ENCODE measurements at regions of chr1 and their contacts with region 1.

Region 1: GRCh38 chr1:109984456-109985275 is at the start of gene AHCYL1:
- DNase-seq: peak; percentile 100
- H3K4me3 ChIP-seq: peak within 1 kb of the TSS; percentile 79
- CTCF ChIP-seq: peak in 1 of 3 donors; percentile 99
- POLR2A ChIP-seq: peak in 1 of 2 donors; percentile 91
- total RNA-seq, gene AHCYL1: 42.3 to 54.4 (median 47.8) TPM

Region 2: DNA sequence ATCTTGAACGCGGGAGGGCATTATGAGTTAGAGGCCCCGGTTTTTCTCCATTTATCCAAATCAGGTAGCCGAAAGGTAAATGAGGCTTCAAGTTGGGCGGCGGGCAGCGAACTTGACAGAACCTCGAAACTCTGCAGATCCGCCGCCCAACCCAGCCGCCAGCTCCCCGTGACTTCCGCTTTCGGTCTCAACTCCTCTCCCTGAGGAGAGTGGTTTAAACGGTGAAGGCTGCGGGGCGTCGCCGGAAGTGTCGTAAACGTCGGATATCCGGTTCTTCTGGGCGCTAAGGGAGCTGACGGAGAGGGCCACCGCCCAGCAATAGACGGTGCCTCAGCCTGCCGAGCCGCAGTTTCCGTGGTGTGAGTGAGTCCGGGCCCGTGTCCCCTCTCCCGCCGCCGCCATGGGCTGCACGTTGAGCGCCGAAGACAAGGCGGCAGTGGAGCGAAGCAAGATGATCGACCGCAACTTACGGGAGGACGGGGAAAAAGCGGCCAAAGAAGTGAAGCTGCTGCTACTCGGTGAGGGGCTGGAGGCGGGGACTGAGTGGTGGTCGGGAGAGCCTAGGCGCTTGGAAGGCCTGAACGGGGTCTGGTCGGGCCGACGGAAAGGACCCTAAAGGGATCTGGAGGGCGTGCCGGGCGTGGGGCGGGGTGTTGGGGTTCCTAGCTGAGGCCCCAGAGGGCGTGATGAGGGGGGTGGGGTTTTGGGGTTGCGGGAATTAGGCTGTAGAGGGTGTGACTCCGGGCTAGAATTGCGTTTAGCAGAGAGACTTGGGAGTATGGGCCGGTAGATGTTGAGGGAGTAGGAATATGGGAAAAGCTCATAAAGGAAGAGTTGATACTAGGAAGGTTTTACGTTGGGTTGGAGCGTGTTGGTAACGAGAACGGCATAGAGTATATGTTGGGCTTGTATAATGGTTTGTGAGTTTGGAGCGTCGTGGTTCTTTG is 436.1 kb before region 1 on chr1 and contains the start of gene GNAI3:
- intact Hi-C with region 1: loop called (anchors 10 kb)
- DNase-seq: peak; percentile 98 to 100
- H3K4me3 ChIP-seq: peak within 1 kb of the TSS; percentile 83
- CTCF ChIP-seq: no peak
- POLR2A ChIP-seq: peak in 1 of 2 donors; percentile 80
- total RNA-seq, gene GNAI3: 8.5 to 13.2 (median 10.7) TPM

Region 3: GRCh38 chr1:109630081-109630897 is 354.4 kb before region 1 on chr1:
- intact Hi-C with region 1: loop called (anchors 10 kb)
- DNase-seq: peak; percentile 13 to 80
- H3K4me3 ChIP-seq: no peak overlapping the region
- CTCF ChIP-seq: no peak
- POLR2A ChIP-seq: no peak

Region 4: DNA sequence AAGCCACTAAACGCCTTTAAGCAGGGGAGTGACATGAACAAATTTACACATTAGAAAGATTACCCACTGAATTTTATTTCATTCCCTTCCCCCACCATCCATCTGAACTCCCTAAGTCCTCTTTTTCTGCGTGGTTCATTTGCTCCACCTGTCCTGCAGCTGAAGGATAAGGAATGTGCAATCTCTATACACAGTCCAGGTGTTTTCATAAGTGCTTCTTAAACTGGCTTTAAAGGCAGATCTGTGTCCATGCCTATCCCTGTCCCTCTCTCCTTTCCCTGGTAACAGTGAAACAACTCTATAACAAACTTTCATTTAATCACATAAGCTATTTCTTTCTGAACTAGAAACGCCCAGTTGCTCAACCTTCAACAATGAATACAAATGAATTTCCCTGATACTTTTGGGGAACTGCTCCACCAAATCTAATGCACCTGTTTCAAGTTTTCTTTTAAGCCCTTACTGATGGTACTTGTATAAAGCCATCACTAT is 252.2 kb before region 1 on chr1:
- intact Hi-C with region 1: no loop called
- DNase-seq: no peak
- H3K4me3 ChIP-seq: no peak overlapping the region
- CTCF ChIP-seq: no peak
- POLR2A ChIP-seq: no peak